Posterior vena cava (tissue), 2 donors: ENCODE measurements at regions of chr6 and their contacts with region 1.

Region 1: DNA sequence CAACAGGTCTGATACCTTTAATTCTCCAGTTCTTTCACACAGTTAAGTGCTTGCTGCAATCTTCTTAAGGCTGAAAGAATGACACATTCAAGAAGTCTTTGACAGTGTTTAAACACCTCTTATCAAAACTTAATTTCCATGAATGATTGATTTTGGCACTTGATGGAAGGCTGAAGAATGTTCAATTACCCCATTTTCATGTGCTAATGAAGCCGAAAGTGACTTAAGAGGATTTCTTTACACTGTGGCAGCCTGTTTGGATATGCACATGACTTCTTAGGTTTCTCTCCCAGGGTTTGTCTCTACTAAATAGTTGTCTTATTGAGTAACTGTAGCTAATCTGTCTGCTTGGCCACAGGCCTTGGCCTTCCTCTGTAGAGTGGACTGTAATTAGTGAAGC is 81.1 kb upstream of the PRDM1 start:
- DNase-seq: no peak

Region 2: GRCh38 chr6:105964979-105965760 is 39.8 kb before region 1 on chr6:
- intact Hi-C with region 1: loop called in 1 of 2 experiments (anchors 2 kb)
- DNase-seq: no peak

Region 3: DNA sequence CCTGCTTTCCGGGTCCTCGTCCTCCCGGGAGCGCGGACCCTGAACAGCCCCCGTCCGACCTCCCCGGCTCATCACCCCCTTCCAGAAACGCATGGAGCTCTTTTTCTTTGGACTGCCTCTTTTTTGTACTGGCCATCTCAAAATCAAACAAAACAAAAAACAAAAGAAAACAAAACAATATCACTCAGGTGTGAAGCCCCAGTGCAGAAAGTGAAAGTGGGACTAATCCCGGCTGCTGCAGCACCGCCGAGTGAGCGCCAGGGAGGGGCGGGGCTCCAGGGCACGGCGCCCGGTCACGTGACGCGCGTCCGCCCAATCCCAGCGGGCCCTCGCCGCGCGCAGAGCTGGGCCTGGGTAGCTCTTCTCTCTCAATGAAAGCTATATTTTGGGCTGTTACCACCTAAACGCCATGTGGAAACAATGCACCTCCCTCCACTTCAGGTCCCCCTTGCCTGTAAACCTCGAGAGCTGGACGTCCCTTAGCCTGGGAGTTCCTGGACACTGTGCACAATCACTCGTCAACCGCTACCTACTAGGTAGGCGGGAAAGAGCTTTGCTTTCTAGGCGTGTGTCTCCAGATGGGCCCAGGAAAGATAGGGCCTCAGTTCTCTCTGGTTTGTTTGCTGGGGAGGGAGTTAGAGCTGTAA is 12.6 kb before region 1 on chr6:
- intact Hi-C with region 1: no loop called
- DNase-seq: peak; percentile 93

Region 4: GRCh38 chr6:106026748-106027715 is 22.0 kb after region 1 on chr6:
- intact Hi-C with region 1: loop called in 1 of 2 experiments (anchors 1 kb)
- DNase-seq: no peak

Region 5: GRCh38 chr6:106037060-106037459 is 32.0 kb after region 1 on chr6:
- intact Hi-C with region 1: no loop called
- DNase-seq: no peak

Region 6: GRCh38 chr6:107237992-107238660 is 1233.1 kb after region 1 on chr6:
- intact Hi-C with region 1: no loop called
- DNase-seq: no peak